GM13977 (cell line): ENCODE measurements at regions of chr3 and their contacts with region 1.

Region 1: GRCh38 chr3:183477801-183478456 is 49.5 kb upstream of the MCF2L2 start:
- DNase-seq: no peak
- CTCF ChIP-seq: no peak

Region 2: DNA sequence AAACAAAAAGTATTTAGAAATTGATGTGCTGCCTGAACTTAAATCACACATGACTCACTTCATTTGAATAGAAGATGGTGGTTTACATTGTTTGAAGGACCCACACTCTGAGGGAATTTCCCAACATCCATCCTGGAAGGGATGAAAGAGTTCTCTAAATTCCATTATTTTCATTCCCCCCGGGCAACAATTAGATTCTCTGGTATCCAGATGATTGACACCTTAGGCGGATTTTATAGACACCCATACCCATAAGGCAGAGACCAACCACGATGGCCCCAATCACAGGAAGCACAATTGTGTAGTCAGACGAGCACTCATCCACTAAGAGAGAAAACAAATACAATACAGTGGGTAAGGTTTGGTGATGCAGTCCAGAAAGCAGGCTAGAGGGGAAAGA is 354.0 kb before region 1 on chr3:
- in situ Hi-C with region 1: no loop called
- DNase-seq: no peak
- CTCF ChIP-seq: no peak

Region 3: GRCh38 chr3:183766745-183767606 is 289.0 kb after region 1 on chr3:
- in situ Hi-C with region 1: loop called (anchors 10 kb)
- DNase-seq: peak; percentile 60
- CTCF ChIP-seq: peak; percentile 83